ENCODE measurements at regions of chr22 and their contacts with region 1.

Region 1: DNA sequence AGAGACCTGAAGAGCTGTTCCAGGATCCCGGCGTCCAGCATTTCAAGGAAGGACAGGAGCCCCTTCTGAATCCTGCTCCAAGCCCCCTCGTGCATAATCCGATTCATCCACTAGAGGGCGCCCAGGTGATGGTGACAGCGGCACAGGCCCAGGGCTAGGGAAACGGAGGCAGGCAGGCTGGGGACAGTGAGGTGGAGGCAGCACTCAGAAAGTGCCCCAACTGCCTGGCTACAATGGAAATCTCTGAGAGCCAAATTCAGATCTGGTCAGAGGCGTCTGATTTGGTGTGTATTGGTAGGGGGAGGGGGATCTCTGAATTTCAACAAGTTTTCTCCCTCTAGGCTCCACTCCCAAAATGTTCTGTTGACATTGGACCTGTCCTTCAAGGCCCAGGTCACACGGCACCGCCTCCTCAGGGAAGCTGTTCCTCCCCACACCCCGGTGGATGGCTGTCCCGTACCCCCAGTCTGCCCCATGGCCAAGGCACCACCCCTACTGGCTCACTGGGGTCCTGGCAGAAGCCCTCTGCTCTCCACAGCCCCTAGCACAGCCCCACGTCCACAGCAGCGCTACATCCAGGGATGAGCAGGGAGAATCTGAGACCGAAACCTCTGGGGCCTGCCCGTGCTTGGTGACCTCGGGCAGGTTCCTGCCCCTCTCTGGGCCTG is 142.9 kb downstream of the CRYBB2 start:
- DNase-seq: peak; percentile 77
- ATAC-seq: peak; percentile 55 to 62

Region 2: DNA sequence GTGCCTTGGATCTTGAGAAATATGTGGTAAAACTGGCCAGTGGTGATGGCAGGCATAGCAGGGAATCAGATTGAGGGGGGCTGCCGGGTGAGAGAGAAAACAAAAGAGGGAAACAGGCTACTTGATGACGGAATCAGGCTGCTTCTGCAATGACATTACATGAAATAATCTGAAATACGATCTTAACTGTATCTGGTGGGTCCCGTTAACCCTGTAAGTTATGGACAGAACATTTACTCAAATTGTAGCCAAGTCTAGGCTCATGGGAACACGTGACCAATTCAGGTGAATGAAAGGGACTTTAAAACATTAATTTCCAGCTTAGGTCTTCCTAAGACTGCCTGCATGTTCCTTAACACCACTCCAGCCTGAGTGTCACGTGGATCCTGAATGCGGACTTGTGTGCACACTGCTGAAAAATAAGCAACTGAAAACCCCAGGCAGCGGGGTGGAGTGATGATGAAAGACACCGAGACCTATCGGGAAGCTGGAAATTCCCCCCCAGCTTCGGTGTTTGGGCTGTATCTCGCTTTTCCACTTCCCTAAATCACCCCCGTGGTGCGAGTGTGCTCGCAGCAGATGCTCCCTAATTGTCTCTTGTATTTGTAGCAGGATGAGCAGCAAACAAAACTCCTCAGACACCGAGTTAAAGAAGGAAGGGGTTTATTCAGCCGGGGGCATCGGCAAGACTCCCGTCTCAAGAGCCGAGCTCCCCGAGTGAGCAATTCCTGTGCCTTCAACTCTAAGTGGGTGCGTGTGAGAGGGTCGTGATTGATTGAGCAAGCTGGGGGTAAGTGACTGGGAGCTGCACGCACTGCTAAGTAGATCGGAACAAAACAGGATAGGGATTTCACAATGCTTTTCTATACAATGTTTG is 57.1 kb after region 1 on chr22:
- intact Hi-C with region 1: loop called in 1 of 2 experiments (anchors 10 kb)
- DNase-seq: no peak
- ATAC-seq: peak; percentile 58 to 71

Region 3: DNA sequence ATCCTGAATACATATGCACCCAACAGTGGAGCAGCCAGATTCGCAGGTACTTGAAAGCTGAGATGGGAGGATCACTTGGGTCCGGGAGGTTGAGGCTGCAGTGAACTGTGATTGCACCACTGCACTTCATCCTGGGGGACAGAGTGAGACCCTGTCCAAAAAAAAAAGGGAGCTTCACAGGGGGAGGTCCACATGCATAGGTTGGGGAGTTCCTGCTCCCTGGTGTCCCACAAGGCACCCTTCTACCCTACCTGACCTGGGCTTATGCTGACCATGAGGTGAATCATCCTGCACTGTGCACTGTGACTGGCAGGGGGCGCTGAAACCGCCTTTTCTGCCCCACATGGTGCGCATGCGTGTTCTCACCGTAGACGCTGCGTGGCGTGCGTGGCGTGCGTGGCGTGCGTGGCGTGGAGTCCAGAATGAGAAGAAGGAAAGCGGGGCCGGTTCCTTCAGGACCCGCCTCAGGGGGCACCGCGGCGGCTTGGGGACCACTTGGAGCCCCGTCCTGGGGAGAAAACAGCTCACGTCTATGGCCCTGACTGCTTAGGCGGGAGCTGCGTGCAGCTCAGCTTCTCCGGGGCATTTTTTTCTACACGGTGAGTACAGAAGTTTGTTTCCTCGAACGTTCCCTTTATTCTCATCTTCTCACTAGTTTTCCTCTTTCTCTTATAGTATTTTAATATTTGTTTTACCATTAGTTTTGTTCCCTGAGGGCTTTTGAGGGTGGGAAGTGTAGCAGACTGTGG is 85.5 kb after region 1 on chr22:
- intact Hi-C with region 1: loop called in 1 of 2 experiments (anchors 5 kb)
- DNase-seq: peak; percentile 94
- ATAC-seq: peak; percentile 97